ENCODE measurements at regions of chr2 and their contacts with region 1.

Region 1: DNA sequence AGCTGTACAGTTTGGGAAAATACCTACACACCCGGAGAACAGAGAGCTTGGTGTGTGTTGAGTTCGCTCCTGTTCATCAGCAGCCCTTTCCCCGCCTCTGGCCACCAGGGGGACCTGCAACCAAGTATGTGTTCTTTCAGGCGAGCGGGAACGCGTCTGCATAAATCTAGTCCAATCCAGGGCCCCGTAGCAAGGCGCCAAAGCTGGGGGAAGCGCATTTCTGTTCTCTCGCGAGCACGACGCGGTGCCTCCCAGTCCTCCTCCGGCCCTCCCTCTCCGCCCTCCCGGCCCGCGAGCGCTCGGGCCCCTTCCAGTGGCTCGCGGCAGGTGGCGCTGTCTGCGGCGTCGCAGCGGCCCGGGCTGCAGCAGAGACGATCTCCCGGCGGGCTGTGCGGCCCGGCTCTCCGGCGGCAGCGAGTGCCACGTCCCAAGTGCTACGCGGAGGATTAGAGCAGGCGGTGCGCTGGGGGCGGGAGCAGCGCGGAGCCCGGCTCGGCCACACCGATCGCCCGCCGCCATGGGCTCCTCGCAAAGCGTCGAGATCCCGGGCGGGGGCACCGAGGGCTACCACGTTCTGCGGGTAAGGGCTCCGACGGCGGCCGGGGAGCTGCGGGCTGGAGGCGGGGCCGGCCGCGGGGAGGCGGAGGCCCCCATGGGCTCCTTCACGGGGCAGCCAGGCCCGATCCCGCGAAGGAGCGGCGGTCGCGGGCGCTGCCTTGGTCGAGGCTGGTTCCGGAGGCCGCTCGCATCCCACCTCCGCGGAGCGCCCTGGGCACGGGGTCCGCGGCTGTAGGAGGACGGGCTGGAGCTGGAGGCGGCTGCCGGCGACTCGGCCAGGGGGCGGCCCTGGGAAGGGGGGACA is at the start of gene GORASP2:
- DNase-seq: peak; percentile 96
- H3K4me3 ChIP-seq: peak within 1 kb of the TSS; percentile 78
- H3K27me3 ChIP-seq: no peaks in the 10 kb centered on the region
- CTCF ChIP-seq: peak; percentile 94
- polyA plus RNA-seq, gene GORASP2: 186 and 194 TPM in 2 replicates

Region 2: GRCh38 chr2:170917219-170917913 is 11.7 kb before region 1 on chr2:
- CTCF ChIA-PET with region 1: interaction called, 16 read pairs
- POLR2A ChIA-PET with region 1: no interaction called
- DNase-seq: no peak
- H3K4me3 ChIP-seq: no peak overlapping the region
- H3K27me3 ChIP-seq: no peaks in the 10 kb centered on the region; the same call in 1 of the 2 replicates
- CTCF ChIP-seq: no peak

Region 3: DNA sequence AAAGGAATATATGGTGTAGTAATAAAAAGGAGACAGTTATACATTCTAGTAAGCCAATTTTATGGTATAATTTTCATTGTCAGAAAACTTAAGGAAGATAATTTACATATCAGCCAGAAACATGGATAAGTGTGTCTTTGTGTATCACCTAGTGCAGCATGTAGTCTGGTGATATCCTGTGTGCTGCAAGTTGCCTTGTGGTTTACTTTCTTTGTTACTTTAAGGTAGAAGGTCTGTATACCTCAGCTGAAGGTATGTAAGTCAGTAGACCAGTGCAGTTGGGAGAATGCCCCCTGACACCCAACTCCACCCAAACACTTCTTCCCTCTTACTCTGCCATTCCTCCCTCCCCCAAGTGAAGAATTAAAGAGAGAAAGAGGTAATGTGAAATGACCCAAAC is 11.0 kb after region 1 on chr2:
- CTCF ChIA-PET with region 1: interaction called, 26 read pairs
- POLR2A ChIA-PET with region 1: interaction called, 7 read pairs
- DNase-seq: no peak
- H3K4me3 ChIP-seq: no peak overlapping the region
- H3K27me3 ChIP-seq: no peaks in the 10 kb centered on the region
- CTCF ChIP-seq: no peak

Measured in BJ (cell line).